ENCODE measurements at regions of chr4 and their contacts with region 1.

Region 1: DNA sequence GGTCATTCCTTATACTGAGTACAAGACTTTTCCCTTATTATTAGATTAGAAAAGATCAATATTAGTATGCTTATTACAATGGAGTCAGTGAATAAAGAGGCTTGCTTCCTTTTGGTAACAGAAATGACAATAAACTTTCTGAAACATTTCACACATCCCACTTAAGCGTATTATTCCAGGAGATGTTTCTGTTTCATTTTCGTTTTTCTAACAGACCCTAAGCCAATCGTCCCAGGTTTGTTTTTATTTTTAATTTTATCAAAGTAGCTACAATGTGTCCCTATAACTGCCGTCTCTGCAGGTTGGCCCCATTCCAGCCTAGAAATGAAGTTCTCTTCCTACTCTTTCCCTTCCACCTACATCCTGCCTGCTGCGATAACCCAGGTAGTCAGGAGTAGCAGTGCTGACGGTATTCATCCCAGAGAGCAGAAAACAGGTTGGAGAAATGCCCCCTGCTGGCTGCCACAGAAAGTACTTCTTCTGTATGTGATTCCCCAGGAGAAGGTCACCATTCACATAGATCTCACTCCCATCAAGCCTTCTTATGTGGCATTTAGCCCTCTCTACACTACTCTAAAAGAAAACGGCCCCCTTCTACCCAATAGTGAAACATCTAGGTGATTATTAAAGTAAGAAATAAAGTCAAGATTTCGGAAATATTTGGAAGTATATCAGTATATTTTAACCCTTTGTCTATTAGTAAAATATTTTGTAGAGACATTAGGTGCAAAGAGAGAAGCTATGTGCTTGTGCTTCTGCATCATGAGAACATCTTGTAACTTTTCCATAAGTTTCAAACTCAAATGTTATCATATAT is 40.4 kb downstream of the ENPEP start:
- DNase-seq: peak; percentile 82
- ATAC-seq: peak; percentile 93
- H3K4me3 Mint-ChIP-seq: peak overlapping the region; percentile 91
- H3K27ac Mint-ChIP-seq: peak overlapping the region; percentile 79
- H3K4me1 Mint-ChIP-seq: peaks cover 18% of the 10 kb centered on the region
- H3K27me3 Mint-ChIP-seq: peaks cover 23% of the 10 kb centered on the region

Region 2: GRCh38 chr4:109998867-109999584 is 517.3 kb before region 1 on chr4:
- CTCF ChIA-PET with region 1: interaction called, 212 read pairs
- DNase-seq: no peak
- ATAC-seq: peak; percentile 75
- H3K4me3 Mint-ChIP-seq: no peak overlapping the region
- H3K27ac Mint-ChIP-seq: no peak overlapping the region
- H3K4me1 Mint-ChIP-seq: peaks cover 28% of the 10 kb centered on the region
- H3K27me3 Mint-ChIP-seq: peaks cover 11% of the 10 kb centered on the region

Region 3: GRCh38 chr4:110005461-110006056 is 510.8 kb before region 1 on chr4:
- CTCF ChIA-PET with region 1: interaction called, 212 read pairs
- DNase-seq: no peak
- ATAC-seq: peak; percentile 53
- H3K4me3 Mint-ChIP-seq: no peak overlapping the region
- H3K27ac Mint-ChIP-seq: no peak overlapping the region
- H3K4me1 Mint-ChIP-seq: peaks cover 12% of the 10 kb centered on the region
- H3K27me3 Mint-ChIP-seq: peaks cover 2% of the 10 kb centered on the region

Region 4: DNA sequence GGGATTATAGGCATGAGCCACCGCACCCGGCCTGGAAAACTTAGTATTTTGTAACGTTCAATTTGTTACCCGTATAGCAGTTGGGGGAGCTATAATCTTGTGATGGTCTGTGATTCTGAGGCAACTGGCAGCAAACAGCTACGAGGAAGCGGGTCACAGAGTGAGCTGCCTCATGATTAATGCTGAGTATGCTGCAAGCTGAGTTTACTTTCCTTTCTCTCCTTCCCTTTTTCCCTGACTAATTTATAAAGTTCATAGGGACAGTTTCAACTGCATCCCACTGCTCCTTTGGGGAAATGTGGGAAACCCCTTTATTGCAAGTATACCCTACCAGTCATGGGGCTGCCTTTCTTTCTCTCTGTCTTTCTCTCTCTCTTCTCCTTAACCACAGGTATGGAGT is 300.2 kb before region 1 on chr4:
- CTCF ChIA-PET with region 1: no interaction called
- DNase-seq: no peak
- ATAC-seq: no peak
- H3K4me3 Mint-ChIP-seq: no peak overlapping the region
- H3K27ac Mint-ChIP-seq: no peak overlapping the region
- H3K4me1 Mint-ChIP-seq: peaks cover 18% of the 10 kb centered on the region
- H3K27me3 Mint-ChIP-seq: peaks cover 20% of the 10 kb centered on the region

Region 5: DNA sequence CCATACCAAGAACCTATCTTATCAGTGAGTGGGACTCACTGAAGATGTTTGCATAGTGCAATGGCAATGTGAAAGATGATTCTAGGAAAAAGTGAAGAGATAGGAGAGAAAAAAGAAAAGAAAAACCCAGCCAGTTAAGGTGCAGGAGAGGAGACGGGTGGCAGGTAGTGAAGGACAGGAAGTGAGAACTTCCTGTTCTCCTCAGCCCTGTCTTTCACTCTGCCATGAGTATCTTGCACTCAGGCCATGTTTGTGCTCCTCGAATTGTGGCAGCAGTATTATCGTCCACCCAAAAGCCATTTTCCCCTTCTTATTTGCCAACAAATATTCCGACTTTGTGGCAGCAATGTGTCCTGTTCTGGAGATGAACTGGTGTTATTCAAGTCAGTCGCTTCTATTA is 48.9 kb before region 1 on chr4:
- CTCF ChIA-PET with region 1: no interaction called
- DNase-seq: no peak
- ATAC-seq: no peak
- H3K4me3 Mint-ChIP-seq: no peak overlapping the region
- H3K27ac Mint-ChIP-seq: no peak overlapping the region
- H3K4me1 Mint-ChIP-seq: peaks cover 10% of the 10 kb centered on the region
- H3K27me3 Mint-ChIP-seq: peaks cover 7% of the 10 kb centered on the region

Region 6: DNA sequence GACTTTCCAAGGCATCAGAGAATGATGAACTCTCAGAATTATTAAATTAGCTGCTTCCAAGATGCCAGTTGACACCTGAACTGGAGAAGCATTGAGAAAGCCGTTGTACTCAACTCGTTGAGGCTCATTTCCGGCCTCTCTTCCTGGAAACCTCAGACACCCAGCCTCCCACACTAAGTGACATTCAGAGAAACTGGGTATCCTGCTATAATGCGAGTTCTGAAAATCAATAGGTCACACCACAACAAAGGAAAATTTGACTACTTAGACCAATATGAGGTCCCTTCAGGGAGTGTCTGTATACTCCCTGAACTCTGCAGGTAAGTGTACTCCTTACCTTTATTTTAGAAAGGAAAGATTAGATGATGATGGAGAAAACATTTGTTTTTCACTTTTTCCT is 10.8 kb after region 1 on chr4:
- CTCF ChIA-PET with region 1: interaction called, 15 read pairs
- DNase-seq: peak; percentile 76
- ATAC-seq: peak; percentile 85
- H3K4me3 Mint-ChIP-seq: no peak overlapping the region
- H3K27ac Mint-ChIP-seq: peak overlapping the region; percentile 69
- H3K4me1 Mint-ChIP-seq: peaks cover 34% of the 10 kb centered on the region
- H3K27me3 Mint-ChIP-seq: peaks cover 7% of the 10 kb centered on the region

Region 7: DNA sequence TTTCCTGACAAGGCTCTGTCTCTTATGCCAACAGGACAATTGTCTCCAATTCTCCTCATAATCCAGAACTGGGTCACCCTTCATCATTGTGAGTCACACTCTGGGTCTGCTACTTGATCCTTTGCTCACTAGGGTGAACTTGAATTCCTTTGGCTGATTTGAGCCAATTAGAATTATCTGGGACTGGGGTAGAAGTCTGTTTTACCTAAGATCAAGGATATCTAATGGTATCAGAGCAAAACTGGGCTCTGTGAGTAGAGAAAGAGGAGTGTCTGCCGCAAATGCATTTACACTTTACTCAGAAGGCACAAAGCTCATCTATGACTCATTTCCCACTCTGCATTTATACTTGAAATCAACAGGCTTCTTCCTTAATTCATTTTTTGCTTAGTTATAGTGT is 33.9 kb after region 1 on chr4:
- CTCF ChIA-PET with region 1: no interaction called
- DNase-seq: no peak
- ATAC-seq: no peak
- H3K4me3 Mint-ChIP-seq: no peak overlapping the region
- H3K27ac Mint-ChIP-seq: no peak overlapping the region
- H3K4me1 Mint-ChIP-seq: no peaks in the 10 kb centered on the region
- H3K27me3 Mint-ChIP-seq: peaks cover 27% of the 10 kb centered on the region

Measured in activated CD8-positive, alpha-beta memory T cell treated with anti-CD3 and anti-CD28 coated beads, Interleukin-2, amount 10 ng/mL, durations not matched to agents 7 days and 5 days (primary cell).